A549 (cell line): ENCODE measurements at regions of chr20 and their contacts with region 1.

Region 1: GRCh38 chr20:10481676-10482075 is 46.6 kb downstream of the SLX4IP start:
- DNase-seq: no peak
- ATAC-seq: no peak
- H3K4me3 ChIP-seq: no peak overlapping the region
- H3K27ac ChIP-seq: no peak overlapping the region
- H3K4me1 ChIP-seq: peaks cover 1% of the 10 kb centered on the region; the same call in 2 of the 3 replicates
- CTCF ChIP-seq: no peak
- EP300 ChIP-seq: no peak
- POLR2A ChIP-seq: no peak
- RAD21 ChIP-seq: no peak

Region 2: DNA sequence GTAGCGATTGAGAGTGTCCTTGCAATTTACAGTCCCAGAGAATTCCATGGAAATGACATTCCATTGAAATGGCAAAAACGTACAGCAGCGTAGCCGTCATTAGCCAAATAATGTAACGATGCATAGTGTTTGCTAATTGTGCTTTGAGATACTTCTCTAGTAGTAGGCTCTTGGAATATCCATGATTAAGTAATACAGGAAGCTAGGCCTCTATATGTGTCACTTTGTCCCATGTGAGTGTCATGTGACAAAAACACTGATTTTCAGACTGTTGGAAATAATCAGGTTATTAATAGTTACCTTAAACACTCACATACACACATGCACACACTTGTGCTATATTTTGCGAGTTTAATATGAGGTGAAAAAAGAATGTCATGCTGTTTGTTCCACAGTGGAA is 11.4 kb before region 1 on chr20:
- CTCF ChIA-PET with region 1: no interaction called
- POLR2A ChIA-PET with region 1: no interaction called
- DNase-seq: no peak
- ATAC-seq: no peak
- H3K4me3 ChIP-seq: no peak overlapping the region
- H3K27ac ChIP-seq: peak overlapping the region in 1 of 2 experiments; percentile 62; a peak in 3 of 6 replicates
- H3K4me1 ChIP-seq: peaks cover 48% of the 10 kb centered on the region
- CTCF ChIP-seq: no peak
- EP300 ChIP-seq: no peak
- POLR2A ChIP-seq: no peak
- RAD21 ChIP-seq: no peak

Region 3: GRCh38 chr20:10504994-10505730 is 23.5 kb after region 1 on chr20:
- CTCF ChIA-PET with region 1: interaction called, 11 read pairs
- POLR2A ChIA-PET with region 1: no interaction called
- DNase-seq: no peak
- ATAC-seq: peak in 1 of 2 experiments; percentile 22; a peak in 1 of 6 replicates
- H3K4me3 ChIP-seq: no peak overlapping the region
- H3K27ac ChIP-seq: peak overlapping the region; percentile 36 to 50; a peak in 3 of 6 replicates
- H3K4me1 ChIP-seq: peaks cover 47% of the 10 kb centered on the region
- CTCF ChIP-seq: no peak
- EP300 ChIP-seq: no peak
- POLR2A ChIP-seq: no peak
- RAD21 ChIP-seq: no peak

Region 4: DNA sequence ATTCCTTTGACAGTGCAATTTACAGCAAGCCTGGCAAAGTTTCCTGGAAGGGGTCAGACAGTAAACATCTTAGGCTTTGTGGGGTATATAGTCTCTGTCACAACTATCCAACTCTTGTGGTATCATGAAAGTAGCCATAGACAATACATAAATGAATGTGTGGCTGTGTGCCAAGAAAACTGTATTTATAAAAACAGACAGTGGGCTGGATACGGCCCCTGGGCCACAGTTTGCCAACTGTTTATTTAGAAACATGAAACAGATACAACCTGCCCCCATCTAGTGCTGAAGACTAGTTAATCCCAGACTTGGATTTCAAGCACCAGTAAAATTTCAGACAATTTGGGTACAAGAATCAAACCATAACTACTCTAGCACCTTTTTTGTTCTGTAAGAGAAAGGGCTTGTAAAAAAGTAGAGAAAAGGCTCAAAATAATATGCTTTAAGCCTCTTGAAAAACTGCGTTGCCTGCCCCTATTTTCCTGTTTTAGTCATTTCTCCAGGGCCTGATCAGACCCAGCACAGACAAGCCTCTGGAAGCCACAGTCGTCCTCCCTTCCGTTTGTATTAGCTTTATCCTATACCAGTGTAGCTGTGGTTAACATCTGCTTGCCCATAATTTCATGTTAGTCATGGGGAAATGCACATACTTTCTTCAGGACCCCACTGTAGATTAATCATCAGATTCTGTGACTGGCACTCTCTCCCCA is 161.3 kb after region 1 on chr20:
- CTCF ChIA-PET with region 1: no interaction called
- POLR2A ChIA-PET with region 1: no interaction called
- DNase-seq: no peak
- ATAC-seq: no peak
- H3K4me3 ChIP-seq: no peak overlapping the region
- H3K27ac ChIP-seq: no peak overlapping the region
- H3K4me1 ChIP-seq: peaks cover 26% of the 10 kb centered on the region
- CTCF ChIP-seq: no peak
- EP300 ChIP-seq: no peak
- POLR2A ChIP-seq: no peak
- RAD21 ChIP-seq: no peak